ENCODE measurements at regions of chr15 and their contacts with region 1.

Region 1: DNA sequence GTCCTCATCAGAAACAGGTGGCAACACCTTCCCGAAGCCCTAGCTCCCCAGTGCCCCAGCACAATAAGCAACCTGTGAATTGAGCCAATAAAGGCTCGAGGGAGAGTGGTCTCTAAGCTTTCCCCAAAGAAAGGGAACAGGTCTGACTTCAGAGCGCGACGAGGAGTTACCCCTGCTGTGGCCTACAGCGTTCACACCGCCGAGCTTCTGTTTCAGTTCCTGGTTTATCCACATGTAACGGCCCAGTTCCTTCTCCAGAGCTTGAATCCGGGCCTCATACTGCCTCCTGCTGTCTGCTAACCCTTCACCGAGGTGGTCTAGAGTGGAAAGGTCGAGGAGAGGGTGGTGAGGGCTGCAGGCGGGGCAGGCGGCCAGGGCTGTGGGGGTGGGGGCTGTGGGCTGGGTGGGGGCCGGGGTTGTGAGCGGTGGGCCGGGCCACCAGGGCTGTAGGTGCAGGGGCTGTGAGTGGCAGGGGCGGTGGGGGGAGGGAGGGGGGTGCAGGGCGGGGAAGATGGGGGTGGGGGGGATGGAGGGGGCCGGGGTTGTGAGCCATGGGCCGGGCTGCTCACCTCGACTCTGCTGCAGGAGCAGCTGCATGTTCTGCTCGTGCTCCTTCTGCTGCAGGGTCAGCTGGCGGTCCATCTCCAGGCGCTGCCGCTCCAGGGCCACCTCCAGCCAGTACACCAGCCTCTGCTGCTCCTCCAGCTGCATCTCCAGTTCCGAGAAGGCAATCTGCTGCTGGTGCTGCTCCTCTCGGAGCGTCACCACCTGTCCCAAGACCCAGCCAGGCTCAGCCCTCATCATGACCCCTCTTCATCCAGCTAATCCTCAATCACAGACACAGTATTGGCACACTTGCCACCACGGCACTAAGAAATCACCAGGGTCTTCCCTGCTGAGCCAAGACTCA is 26.2 kb downstream of the KIF7 start:
- DNase-seq: no peak
- H3K4me3 ChIP-seq: no peak overlapping the region
- CTCF ChIP-seq: no peak

Region 2: DNA sequence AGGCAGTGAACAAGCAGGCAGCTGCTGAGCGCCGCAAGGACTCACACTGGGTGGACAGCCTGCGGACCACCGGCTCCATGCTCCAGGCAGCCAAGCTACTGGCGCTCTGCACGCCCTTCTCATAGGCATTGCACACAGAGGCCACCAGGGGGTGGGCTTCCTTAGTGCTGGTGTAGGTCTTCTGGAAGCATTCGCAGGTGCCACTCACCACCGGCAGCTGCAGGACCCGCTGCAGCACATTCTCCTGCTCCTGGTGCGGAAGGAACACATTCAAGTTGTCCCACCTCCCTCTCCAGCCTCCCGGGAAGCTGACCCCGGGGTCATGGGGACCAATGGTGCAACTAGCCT is 44.1 kb after region 1 on chr15:
- in situ Hi-C with region 1: loop called (anchors 5 kb)
- DNase-seq: no peak
- H3K4me3 ChIP-seq: no peak overlapping the region
- CTCF ChIP-seq: peak; percentile 54

Measured in astrocyte of the cerebellum (primary cell).